Ovary (tissue), 10 donors: ENCODE measurements at regions of chr18 and their contacts with region 1.

Region 1: GRCh38 chr18:61941948-61942471 is 49.2 kb upstream of the RNF152 start:
- DNase-seq: no peak
- H3K4me3 ChIP-seq: no peak overlapping the region
- H3K27ac ChIP-seq: no peak overlapping the region
- H3K4me1 ChIP-seq: no peaks in the 10 kb centered on the region
- H3K27me3 ChIP-seq: no peaks in the 10 kb centered on the region
- CTCF ChIP-seq: no peak
- EP300 ChIP-seq: no peak
- POLR2A ChIP-seq: no peak

Region 2: DNA sequence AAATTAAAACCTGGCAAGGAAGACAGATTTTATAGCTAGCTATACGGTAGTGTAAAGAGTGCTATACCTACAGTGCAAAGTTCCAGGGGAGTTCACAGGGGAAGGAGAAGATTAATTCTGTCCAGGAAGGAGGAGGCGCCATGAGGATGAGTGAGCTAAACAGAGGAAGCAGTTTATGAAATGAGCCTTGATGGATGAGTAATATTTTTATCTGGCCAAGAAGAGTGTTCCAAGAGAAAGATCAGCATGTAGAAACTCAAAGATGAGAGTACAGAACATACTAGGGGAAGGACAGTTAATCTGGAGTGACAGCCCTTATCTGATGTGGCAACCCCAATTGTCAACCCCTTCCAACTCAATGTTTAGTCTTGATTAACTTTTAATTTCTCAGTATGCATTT is 554.0 kb before region 1 on chr18:
- intact Hi-C with region 1: no loop called
- DNase-seq: no peak
- H3K4me3 ChIP-seq: no peak overlapping the region
- H3K27ac ChIP-seq: no peak overlapping the region
- H3K4me1 ChIP-seq: no peaks in the 10 kb centered on the region
- H3K27me3 ChIP-seq: no peaks in the 10 kb centered on the region
- CTCF ChIP-seq: no peak
- EP300 ChIP-seq: no peak
- POLR2A ChIP-seq: no peak

Region 3: GRCh38 chr18:61921621-61922235 is 20.3 kb before region 1 on chr18:
- intact Hi-C with region 1: loop called in 1 of 4 experiments (anchors 2 kb)
- DNase-seq: no peak
- H3K4me3 ChIP-seq: no peak overlapping the region
- H3K27ac ChIP-seq: no peak overlapping the region
- H3K4me1 ChIP-seq: no peaks in the 10 kb centered on the region
- H3K27me3 ChIP-seq: no peaks in the 10 kb centered on the region
- CTCF ChIP-seq: no peak
- EP300 ChIP-seq: no peak
- POLR2A ChIP-seq: no peak